ENCODE measurements at regions of chr7 and their contacts with region 1.

Region 1: DNA sequence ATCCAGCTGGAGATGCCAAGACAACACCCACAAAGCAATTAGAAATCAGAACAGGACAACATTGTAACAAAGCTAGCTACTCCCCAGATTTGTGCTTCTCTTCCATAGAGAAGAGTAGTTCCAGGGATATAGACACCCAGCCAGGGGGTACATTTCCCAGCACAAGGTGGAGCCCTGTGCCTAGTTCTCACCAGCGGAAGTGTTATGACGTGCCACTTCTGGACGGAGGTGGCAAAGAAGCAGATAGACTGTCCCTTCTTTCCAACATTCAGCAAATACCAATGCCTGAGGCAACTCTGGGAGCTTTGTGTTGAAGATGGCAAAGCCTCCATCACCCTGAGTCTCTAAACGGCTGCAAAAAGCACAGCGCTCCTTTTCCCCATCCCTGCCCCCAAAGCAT is 23.4 kb upstream of the GSAP start:
- DNase-seq: peak; percentile 31 to 44
- H3K4me3 ChIP-seq: no peak overlapping the region
- H3K27ac ChIP-seq: no peak overlapping the region
- H3K4me1 ChIP-seq: peaks cover 12% of the 10 kb centered on the region; the same call in 1 of the 2 replicates
- H3K27me3 ChIP-seq: no peaks in the 10 kb centered on the region
- CTCF ChIP-seq: peak; percentile 49

Region 2: DNA sequence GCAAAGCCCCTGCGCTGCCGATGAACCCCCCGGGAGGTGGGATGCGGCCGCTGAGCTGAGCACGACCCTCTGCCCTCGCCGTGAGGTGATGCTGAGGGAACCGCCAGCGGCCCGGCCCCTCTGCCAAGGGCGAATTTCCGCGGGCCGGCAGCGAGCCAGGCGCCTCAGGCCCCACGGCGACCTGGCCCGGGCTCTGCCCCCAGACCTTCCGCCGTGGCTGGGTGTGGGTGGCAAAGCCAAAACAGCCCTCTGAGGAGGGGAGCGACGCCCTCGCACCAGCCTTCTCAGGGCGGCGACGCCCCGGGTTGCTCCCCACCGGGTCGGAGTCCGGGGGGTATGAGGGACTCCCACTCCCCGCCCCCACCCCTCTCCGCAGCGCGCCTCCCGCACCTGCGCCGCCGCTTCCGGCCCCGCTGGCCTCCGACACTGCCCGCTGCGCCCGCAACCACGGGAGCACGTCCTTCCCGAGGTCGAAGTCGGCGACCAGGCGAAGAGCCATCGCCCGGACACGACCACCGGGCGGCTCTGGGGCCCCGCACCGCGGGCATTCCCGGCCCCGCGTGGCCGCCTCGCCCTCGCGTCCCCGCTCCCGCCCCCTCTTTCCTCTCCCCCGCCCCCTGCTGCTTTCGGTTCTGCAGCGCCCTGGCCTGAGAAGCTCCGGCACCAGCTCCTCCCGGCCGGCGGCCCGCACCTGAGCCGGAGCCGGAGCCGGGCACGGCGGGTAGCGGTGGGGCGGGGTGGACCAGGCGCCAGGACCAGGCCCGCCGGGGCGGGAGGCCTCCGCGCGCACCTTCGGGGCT is 23.5 kb before region 1 on chr7 and contains the start of gene GSAP:
- CTCF ChIA-PET with region 1: no interaction called
- POLR2A ChIA-PET with region 1: interaction called, 12 read pairs
- intact Hi-C with region 1: no loop called
- DNase-seq: peak in 1 of 2 experiments; percentile 61
- H3K4me3 ChIP-seq: peak within 1 kb of the TSS; percentile 87
- H3K27ac ChIP-seq: peak within 1 kb of the TSS; percentile 80
- H3K4me1 ChIP-seq: peaks cover 44% of the 10 kb centered on the region
- H3K27me3 ChIP-seq: no peaks in the 10 kb centered on the region
- CTCF ChIP-seq: no peak
- total RNA-seq, gene GSAP: 15.6 and 17.2 TPM in 2 replicates

Region 3: GRCh38 chr7:77606562-77606961 is 167.0 kb after region 1 on chr7:
- CTCF ChIA-PET with region 1: no interaction called
- POLR2A ChIA-PET with region 1: no interaction called
- intact Hi-C with region 1: no loop called
- DNase-seq: no peak
- H3K4me3 ChIP-seq: no peak overlapping the region
- H3K27ac ChIP-seq: 0 out of 2 replicates have a peak overlapping the region, but pooled peaks have one; percentile 5
- H3K4me1 ChIP-seq: peaks cover 16% of the 10 kb centered on the region
- H3K27me3 ChIP-seq: no peaks in the 10 kb centered on the region
- CTCF ChIP-seq: no peak